T-cell (primary cell): ENCODE measurements at regions of chr22 and their contacts with region 1.

Region 1: GRCh38 chr22:22884010-22884887 is 3.4 kb upstream of the IGLL5 start:
- DNase-seq: peak; percentile 25 to 87 (median 60)
- ATAC-seq: peak; percentile 70 to 82 (median 80)
- H3K4me3 ChIP-seq: no peak overlapping the region
- H3K4me3 Mint-ChIP-seq: no peak overlapping the region
- H3K27ac ChIP-seq: no peak overlapping the region
- H3K27ac Mint-ChIP-seq: peak overlapping the region in 1 of 2 donors; percentile 43
- H3K4me1 ChIP-seq: peaks cover 0 to 8% of the 10 kb centered on the region in 2 experiments
- H3K4me1 Mint-ChIP-seq: peaks cover 0 to 8% (median 4%) of the 10 kb centered on the region in 3 donors
- H3K27me3 ChIP-seq: peaks cover 0 to 26% of the 10 kb centered on the region in 2 experiments
- H3K27me3 Mint-ChIP-seq: peaks cover 3 to 9% of the 10 kb centered on the region in 2 donors

Region 2: DNA sequence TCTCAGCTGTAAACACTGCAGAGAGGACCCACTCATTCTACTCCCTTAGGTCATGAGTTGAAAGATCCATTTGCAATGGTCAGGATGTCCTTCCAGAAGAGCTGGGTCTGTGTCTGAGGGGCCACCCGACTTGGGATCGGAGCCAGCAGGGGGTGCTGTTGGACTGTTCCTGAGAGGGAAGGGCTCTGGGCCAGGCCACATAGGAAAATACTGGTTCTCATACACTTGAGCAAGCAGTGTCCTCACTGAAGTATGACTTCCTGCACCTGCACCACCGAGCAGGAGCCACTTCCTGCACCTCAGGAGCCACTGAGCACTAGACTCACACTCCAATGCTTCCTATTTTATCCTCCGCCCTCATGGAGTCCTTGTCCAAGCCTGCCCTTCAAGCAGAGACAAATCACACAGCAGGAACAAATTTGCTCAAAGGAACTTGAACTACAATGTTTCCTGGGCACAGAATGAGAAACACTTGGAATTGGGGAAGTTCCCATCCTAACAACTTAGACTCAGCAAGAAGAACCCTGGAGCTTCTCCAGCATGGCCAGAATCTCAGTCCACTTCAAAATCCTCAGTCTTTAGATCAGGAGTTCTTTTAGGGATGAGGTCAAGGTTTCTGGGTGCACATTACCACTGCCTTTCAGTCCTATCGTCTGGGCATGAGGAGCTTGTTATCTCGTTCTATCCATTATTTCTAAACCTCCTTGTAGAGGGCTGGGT is 676.2 kb before region 1 on chr22:
- CTCF ChIA-PET with region 1: no interaction called
- POLR2A ChIA-PET with region 1: no interaction called
- DNase-seq: peak; percentile 28 to 86 (median 62)
- ATAC-seq: peak; percentile 74 to 95 (median 85)
- H3K4me3 ChIP-seq: no peak overlapping the region
- H3K4me3 Mint-ChIP-seq: peak overlapping the region in 1 of 3 donors; percentile 57
- H3K27ac ChIP-seq: no peak overlapping the region
- H3K27ac Mint-ChIP-seq: peak overlapping the region; percentile 44 to 58
- H3K4me1 ChIP-seq: peaks cover 4 to 34% of the 10 kb centered on the region in 2 experiments
- H3K4me1 Mint-ChIP-seq: peaks cover 30 to 33% (median 30%) of the 10 kb centered on the region in 3 donors
- H3K27me3 ChIP-seq: peaks cover 0 to 7% of the 10 kb centered on the region in 2 experiments
- H3K27me3 Mint-ChIP-seq: peaks cover 0 to 3% of the 10 kb centered on the region in 2 donors

Region 3: DNA sequence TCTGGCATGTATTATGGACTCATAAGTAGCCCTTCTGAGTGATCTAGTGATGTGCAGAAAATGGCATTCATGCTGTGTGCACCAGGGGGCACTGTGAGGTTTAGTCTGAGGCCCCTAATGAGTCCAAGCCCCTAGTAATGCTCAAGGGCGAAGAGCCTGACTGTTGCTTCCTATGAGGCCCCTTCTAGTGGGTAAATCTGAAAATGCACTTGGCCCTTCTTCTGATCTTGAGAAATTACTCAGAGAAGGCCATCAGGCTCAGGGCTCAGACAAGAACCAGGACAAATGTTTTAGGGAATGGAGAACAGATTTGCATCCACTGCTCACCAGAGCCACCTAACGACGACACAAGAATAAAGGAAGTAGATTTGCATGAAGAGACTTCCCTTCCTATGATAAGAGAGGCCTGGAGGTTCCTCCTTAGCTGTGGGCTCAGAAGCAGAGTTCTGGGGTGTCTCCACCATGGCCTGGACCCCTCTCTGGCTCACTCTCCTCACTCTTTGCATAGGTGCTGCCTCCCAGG is 164.0 kb before region 1 on chr22:
- CTCF ChIA-PET with region 1: interaction called in 1 of 2 experiments, 13 read pairs
- POLR2A ChIA-PET with region 1: no interaction called
- DNase-seq: peak in 28 of 35 experiments; percentile 13 to 74 (median 36)
- ATAC-seq: peak; percentile 70 to 79 (median 75)
- H3K4me3 ChIP-seq: no peak overlapping the region
- H3K4me3 Mint-ChIP-seq: no peak overlapping the region
- H3K27ac ChIP-seq: peak overlapping the region; percentile 64
- H3K27ac Mint-ChIP-seq: peak overlapping the region; percentile 67 to 73
- H3K4me1 ChIP-seq: peaks cover 8 to 30% of the 10 kb centered on the region in 2 experiments
- H3K4me1 Mint-ChIP-seq: peaks cover 23 to 37% (median 28%) of the 10 kb centered on the region in 3 donors
- H3K27me3 ChIP-seq: no peaks in the 10 kb centered on the region
- H3K27me3 Mint-ChIP-seq: peaks cover 2 to 3% of the 10 kb centered on the region in 2 donors

Region 4: DNA sequence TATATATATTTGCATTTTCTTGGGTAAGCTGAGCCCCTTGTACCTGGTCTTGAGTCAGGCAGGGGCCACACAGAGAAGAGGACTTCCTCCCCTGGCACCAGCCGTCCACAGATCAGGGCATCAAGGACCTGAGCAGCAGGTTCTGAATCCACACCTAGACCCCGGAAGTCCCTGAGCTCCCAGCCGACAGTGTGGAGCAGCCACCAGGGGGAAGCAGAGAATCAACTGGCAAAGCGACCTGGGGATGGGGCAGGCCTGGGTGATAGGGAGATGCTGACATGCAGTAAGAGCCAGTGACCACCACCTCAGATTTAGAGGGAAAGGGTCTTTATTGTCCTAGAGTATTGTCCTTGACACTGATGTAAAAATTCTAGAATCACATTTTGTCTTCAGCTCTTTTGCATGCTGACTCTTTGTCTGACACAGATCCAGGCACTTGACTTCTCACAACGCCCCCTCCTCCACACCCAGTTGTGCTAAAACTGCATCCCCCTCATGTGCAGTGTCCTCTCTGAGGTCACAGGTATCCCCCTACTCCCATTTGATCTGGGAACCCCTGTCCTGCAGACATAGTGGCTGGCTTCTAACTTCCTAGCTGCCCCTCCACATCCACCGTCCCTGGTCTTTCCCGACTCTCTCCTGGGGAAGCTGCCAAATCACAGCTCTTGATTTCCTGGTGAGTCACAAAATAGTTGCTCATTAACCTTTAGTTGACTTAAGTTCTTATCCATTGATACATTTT is 130.6 kb before region 1 on chr22:
- CTCF ChIA-PET with region 1: interaction called, 9 to 50 read pairs
- POLR2A ChIA-PET with region 1: no interaction called
- DNase-seq: peak; percentile 61 to 89 (median 78)
- ATAC-seq: peak; percentile 84 to 91 (median 88)
- H3K4me3 ChIP-seq: peak overlapping the region in 1 of 2 donors; percentile 3
- H3K4me3 Mint-ChIP-seq: peak overlapping the region in 2 of 3 donors; percentile 13 to 52
- H3K27ac ChIP-seq: peak overlapping the region; percentile 78
- H3K27ac Mint-ChIP-seq: peak overlapping the region; percentile 96 to 99
- H3K4me1 ChIP-seq: peaks cover 3 to 61% of the 10 kb centered on the region in 2 experiments
- H3K4me1 Mint-ChIP-seq: peaks cover 38 to 60% (median 40%) of the 10 kb centered on the region in 3 donors
- H3K27me3 ChIP-seq: no peaks in the 10 kb centered on the region
- H3K27me3 Mint-ChIP-seq: no peaks in the 10 kb centered on the region

Region 5: GRCh38 chr22:22787786-22788459 is 96.3 kb before region 1 on chr22:
- CTCF ChIA-PET with region 1: interaction called in 1 of 2 experiments, 22 read pairs
- POLR2A ChIA-PET with region 1: no interaction called
- DNase-seq: peak; percentile 24 to 82 (median 58)
- ATAC-seq: peak; percentile 66 to 78 (median 68)
- H3K4me3 ChIP-seq: no peak overlapping the region
- H3K4me3 Mint-ChIP-seq: no peak overlapping the region
- H3K27ac ChIP-seq: peak overlapping the region; percentile 80
- H3K27ac Mint-ChIP-seq: peak overlapping the region; percentile 82 to 84
- H3K4me1 ChIP-seq: peaks cover 16 to 64% of the 10 kb centered on the region in 2 experiments
- H3K4me1 Mint-ChIP-seq: peaks cover 29 to 57% (median 49%) of the 10 kb centered on the region in 3 donors
- H3K27me3 ChIP-seq: peaks cover 0 to 3% of the 10 kb centered on the region in 2 experiments
- H3K27me3 Mint-ChIP-seq: peaks cover 0 to 5% of the 10 kb centered on the region in 2 donors

Region 6: GRCh38 chr22:22810018-22810427 is 74.2 kb before region 1 on chr22:
- CTCF ChIA-PET with region 1: interaction called, 5 to 43 read pairs
- POLR2A ChIA-PET with region 1: interaction called in 1 of 2 experiments, 7 read pairs
- DNase-seq: peak in 31 of 35 experiments; percentile 31 to 92 (median 67)
- ATAC-seq: peak; percentile 85 to 93 (median 85)
- H3K4me3 ChIP-seq: no peak overlapping the region
- H3K4me3 Mint-ChIP-seq: peak overlapping the region in 1 of 3 donors; percentile 40
- H3K27ac ChIP-seq: peak overlapping the region; percentile 11
- H3K27ac Mint-ChIP-seq: peak overlapping the region; percentile 50 to 70
- H3K4me1 ChIP-seq: peaks cover 3 to 45% of the 10 kb centered on the region in 2 experiments
- H3K4me1 Mint-ChIP-seq: peaks cover 37 to 66% (median 59%) of the 10 kb centered on the region in 3 donors
- H3K27me3 ChIP-seq: no peaks in the 10 kb centered on the region
- H3K27me3 Mint-ChIP-seq: no peaks in the 10 kb centered on the region

Region 7: DNA sequence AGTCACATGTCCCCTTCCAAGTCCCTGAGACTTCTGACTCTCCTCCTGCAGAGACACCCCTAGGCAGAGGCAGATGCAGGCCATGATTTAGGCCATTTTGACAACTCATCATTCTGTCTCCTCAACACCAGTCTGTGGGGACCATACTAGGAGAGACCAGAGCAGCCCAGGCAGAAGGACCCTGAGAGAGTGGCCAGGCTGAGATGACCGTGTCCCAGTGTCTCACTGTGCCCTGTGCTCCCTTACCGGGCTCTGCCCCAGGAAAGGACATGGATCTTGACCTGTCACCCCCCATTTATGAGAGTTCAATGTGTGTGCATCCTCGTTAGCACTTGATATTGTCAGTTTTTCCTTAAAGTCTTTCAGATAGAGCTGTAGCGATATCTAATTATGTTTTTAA is 49.0 kb before region 1 on chr22:
- CTCF ChIA-PET with region 1: no interaction called
- POLR2A ChIA-PET with region 1: no interaction called
- DNase-seq: no peak
- ATAC-seq: no peak
- H3K4me3 ChIP-seq: no peak overlapping the region
- H3K4me3 Mint-ChIP-seq: no peak overlapping the region
- H3K27ac ChIP-seq: no peak overlapping the region
- H3K27ac Mint-ChIP-seq: peak overlapping the region in 1 of 2 donors; percentile 11
- H3K4me1 ChIP-seq: peaks cover 9 to 14% of the 10 kb centered on the region in 2 experiments
- H3K4me1 Mint-ChIP-seq: peaks cover 16 to 25% (median 23%) of the 10 kb centered on the region in 3 donors
- H3K27me3 ChIP-seq: no peaks in the 10 kb centered on the region
- H3K27me3 Mint-ChIP-seq: no peaks in the 10 kb centered on the region

Region 8: GRCh38 chr22:22983123-22983522 is 98.9 kb after region 1 on chr22:
- CTCF ChIA-PET with region 1: no interaction called
- POLR2A ChIA-PET with region 1: no interaction called
- DNase-seq: no peak
- ATAC-seq: peak in 1 of 4 experiments; percentile 45
- H3K4me3 ChIP-seq: no peak overlapping the region
- H3K4me3 Mint-ChIP-seq: no peak overlapping the region
- H3K27ac ChIP-seq: no peak overlapping the region
- H3K27ac Mint-ChIP-seq: no peak overlapping the region
- H3K4me1 ChIP-seq: peaks cover 0 to 12% of the 10 kb centered on the region in 2 experiments
- H3K4me1 Mint-ChIP-seq: peaks cover 5 to 9% (median 6%) of the 10 kb centered on the region in 3 donors
- H3K27me3 ChIP-seq: peaks cover 0 to 7% of the 10 kb centered on the region in 2 experiments
- H3K27me3 Mint-ChIP-seq: peaks cover 7 to 15% of the 10 kb centered on the region in 2 donors